Right cardiac atrium (tissue), 5 donors: ENCODE measurements at regions of chr3 and their contacts with region 1.

Region 1: DNA sequence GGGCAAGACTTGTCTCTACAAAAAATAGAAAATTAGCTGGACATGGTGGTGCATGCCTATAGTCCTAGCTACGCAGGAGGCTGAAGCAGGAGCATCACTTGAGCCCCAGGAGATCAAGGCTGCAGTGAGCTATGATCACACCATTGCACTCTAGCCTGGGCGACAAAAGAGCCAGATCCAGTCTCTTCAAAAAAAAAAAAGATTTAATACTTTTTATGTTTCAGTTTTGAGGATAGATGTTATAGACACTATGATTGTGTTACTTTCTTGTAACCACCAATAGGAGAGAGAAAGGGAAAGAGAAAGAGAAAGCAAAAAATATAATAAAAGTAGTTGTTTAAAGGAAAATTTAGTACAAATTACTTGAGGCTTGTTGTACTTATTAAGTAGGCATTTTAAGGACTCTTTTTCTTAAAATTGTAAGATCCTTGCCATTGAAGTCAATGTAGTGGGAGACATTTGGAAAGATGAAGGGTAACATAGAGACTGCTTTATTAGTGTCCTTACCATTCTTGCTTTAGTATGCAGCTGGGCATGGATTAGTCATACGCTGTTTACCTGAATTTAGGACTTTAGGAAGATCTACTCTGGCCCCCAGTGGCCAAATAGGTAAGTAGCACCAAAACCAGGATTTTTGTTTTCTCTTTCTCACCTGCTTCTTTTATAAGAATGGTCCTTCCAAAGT is 35.1 kb upstream of the ZDHHC23 start:
- DNase-seq: no peak
- ATAC-seq: peak in 1 of 2 donors; percentile 57
- H3K4me3 ChIP-seq: no peak overlapping the region
- H3K27ac ChIP-seq: no peak overlapping the region
- H3K4me1 ChIP-seq: no peaks in the 10 kb centered on the region
- H3K27me3 ChIP-seq: no peaks in the 10 kb centered on the region

Region 2: DNA sequence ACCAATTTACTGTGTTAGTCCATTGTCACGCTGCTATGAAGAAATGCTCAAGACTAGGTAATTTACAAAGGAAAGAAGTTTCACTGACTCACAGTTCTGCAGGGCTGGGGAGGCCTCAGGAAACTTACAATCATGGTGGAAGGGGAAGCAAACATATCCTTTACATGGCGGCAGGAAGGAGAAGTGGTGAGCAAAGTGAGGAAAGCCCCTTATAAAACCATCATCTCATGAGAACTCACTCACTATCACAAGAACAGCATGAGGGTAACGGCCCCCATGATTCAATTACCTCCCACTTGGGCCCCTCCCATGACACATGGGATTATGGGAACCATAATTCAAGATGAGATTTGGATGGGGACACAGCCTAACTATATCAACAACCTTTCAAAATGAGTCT is 236.4 kb before region 1 on chr3:
- intact Hi-C with region 1: no loop called
- DNase-seq: no peak
- ATAC-seq: no peak
- H3K4me3 ChIP-seq: no peak overlapping the region
- H3K27ac ChIP-seq: no peak overlapping the region
- H3K4me1 ChIP-seq: no peaks in the 10 kb centered on the region
- H3K27me3 ChIP-seq: no peaks in the 10 kb centered on the region

Region 3: GRCh38 chr3:113736548-113737089 is 176.1 kb before region 1 on chr3:
- intact Hi-C with region 1: loop called in 1 of 4 experiments (anchors 5 kb)
- DNase-seq: no peak
- ATAC-seq: peak; percentile 78
- H3K4me3 ChIP-seq: no peak overlapping the region
- H3K27ac ChIP-seq: no peak overlapping the region
- H3K4me1 ChIP-seq: no peaks in the 10 kb centered on the region
- H3K27me3 ChIP-seq: no peaks in the 10 kb centered on the region

Region 4: DNA sequence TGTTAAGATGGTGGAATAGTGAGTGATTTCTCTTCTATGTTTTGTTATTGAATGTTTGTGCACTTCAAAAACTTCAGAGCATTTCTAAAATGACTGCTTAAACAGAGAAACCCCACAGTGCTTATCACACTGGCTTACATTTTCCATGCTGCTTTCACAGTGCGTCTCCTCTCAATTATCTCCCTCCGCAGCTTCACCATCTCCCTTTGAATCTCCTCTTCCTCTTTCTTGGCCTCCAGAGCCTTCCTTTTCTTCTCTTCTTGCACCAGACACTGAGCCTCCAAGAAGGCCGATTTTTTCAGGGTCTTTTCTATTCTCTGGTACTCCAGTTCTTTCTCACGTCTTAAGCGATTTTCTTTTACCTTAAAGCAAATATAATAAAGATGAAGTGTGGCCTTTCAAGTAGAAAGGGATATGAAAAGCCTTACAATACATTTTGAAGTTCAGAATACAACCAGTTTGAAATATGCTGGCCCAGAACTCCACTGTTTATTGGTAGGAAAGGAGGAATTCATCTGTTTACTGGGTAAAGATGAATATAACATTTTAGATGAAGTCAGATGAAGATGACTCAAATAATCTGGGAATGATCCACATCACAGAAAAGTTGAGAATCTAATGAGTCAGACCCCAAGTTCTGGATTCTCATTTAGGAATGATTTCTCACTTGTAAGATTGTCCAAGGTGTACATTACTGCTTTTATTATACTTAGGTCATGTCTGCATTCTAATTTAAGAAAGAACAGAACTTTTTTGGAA is 122.3 kb after region 1 on chr3:
- intact Hi-C with region 1: no loop called
- DNase-seq: no peak
- ATAC-seq: no peak
- H3K4me3 ChIP-seq: no peak overlapping the region
- H3K27ac ChIP-seq: no peak overlapping the region
- H3K4me1 ChIP-seq: no peaks in the 10 kb centered on the region
- H3K27me3 ChIP-seq: no peaks in the 10 kb centered on the region

Region 5: DNA sequence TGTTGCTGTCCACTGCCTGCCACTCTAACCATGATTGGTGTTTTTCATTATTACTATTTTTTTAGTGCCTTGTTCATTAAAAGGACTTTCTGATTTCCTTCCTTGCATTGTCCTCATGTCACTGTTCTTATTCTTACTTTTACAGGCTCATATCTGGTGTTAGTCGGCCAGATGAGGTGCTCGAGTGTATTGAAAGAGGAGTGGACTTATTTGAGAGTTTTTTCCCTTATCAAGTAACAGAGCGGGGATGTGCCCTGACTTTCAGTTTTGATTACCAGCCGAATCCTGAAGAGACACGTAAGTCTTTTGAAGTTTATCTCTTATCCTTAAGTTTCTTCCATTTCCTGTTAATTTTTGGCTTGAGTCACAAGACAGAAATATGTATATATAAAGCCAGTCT is 167.1 kb after region 1 on chr3:
- intact Hi-C with region 1: no loop called
- DNase-seq: no peak
- ATAC-seq: peak in 1 of 2 donors; percentile 62
- H3K4me3 ChIP-seq: peak overlapping the region; percentile 10
- H3K27ac ChIP-seq: no peak overlapping the region
- H3K4me1 ChIP-seq: no peaks in the 10 kb centered on the region
- H3K27me3 ChIP-seq: no peaks in the 10 kb centered on the region